ENCODE measurements at regions of chr19 and their contacts with region 1.

Region 1: GRCh38 chr19:37329686-37330085 is 41.2 kb upstream of the ZNF527 start:
- DNase-seq: no peak
- ATAC-seq: no peak
- H3K4me3 ChIP-seq: no peak overlapping the region
- H3K27ac ChIP-seq: no peak overlapping the region
- H3K4me1 ChIP-seq: peaks cover 4% of the 10 kb centered on the region
- H3K27me3 ChIP-seq: no peaks in the 10 kb centered on the region
- CTCF ChIP-seq: peak in 2 of 7 experiments; percentile 2 to 7
- POLR2A ChIP-seq: no peak

Region 2: GRCh38 chr19:37466798-37467607 is 137.3 kb after region 1 on chr19 and contains the start of gene ZNF569:
- intact Hi-C with region 1: loop called (anchors 10 kb)
- DNase-seq: peak; percentile 92 to 96 (median 94)
- ATAC-seq: peak; percentile 88
- H3K4me3 ChIP-seq: peak within 1 kb of the TSS; percentile 29 to 44
- H3K27ac ChIP-seq: peak within 1 kb of the TSS; percentile 18 to 92 (median 72)
- H3K4me1 ChIP-seq: peaks cover 24% of the 10 kb centered on the region
- H3K27me3 ChIP-seq: no peaks in the 10 kb centered on the region
- CTCF ChIP-seq: no peak
- POLR2A ChIP-seq: peak in 2 of 3 donors; percentile 59 to 65
- total RNA-seq, gene ZNF569: 1.3 to 2.3 TPM

Measured in body of pancreas (tissue), 4 donors.